AG04450 (cell line): ENCODE measurements at regions of chr1 and their contacts with region 1.

Region 1: DNA sequence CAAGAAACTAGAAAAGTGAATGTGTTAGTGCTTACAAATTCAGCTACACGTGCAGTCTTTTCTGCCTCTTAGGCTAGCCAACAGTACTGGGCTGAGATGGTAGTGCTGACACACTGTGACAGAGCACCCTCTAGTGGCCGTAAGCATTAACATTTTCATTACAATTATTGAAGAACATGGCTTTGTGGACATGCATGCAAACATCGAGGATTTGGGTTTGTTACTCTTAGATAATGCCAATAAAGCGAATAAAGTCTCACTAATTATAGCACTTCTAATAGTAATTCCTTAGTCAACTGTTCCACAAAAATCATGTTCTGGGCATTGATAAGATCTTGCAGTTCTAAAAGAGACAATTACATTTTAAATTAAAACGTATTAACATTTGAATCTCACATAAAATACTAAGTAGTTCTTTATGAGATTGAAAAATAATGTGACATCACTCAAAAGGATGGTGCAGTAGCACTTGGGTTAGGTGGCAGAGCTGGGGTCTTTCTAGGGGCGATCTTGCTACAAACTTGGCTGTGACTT is 47.1 kb downstream of the MYSM1 start:
- DNase-seq: peak; percentile 72
- H3K4me3 ChIP-seq: no peak overlapping the region
- H3K27ac ChIP-seq: no peak overlapping the region
- H3K27me3 ChIP-seq: no peaks in the 10 kb centered on the region
- CTCF ChIP-seq: peak; percentile 77

Region 2: DNA sequence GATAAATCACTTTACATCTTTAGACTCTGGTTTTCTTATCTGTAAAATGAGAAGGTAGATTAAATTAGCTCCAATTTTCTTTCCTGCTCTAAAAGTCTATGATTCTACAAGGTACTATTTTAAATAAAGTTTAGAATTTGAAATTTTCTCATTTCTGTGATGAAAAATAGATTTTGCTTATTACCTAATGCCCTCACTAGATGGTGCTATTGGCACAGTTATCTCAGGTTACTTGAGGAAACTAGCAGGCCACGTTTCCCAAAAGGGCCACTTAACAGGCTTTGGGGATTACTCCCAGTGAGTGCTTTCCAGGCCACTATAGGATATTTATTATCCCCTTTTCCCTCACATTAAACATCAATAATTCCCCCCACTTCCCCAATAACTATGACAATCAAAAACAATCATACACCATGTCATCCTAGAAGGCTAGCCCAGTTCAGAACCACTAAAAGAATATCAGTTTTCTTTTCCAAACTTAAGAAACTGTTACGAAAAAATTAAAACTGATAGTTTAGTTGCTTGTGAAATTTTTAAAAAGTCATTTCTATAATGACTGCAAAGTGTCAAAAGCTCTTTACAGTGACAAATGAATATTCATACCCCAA is 136.8 kb before region 1 on chr1:
- CTCF ChIA-PET with region 1: interaction called, 492 read pairs
- POLR2A ChIA-PET with region 1: no interaction called
- DNase-seq: peak; percentile 66
- H3K4me3 ChIP-seq: no peak overlapping the region
- H3K27ac ChIP-seq: no peak overlapping the region
- H3K27me3 ChIP-seq: no peaks in the 10 kb centered on the region
- CTCF ChIP-seq: peak; percentile 70

Region 3: GRCh38 chr1:58546520-58547308 is 106.0 kb before region 1 on chr1 and contains the start of gene OMA1:
- CTCF ChIA-PET with region 1: interaction called, 50 read pairs
- POLR2A ChIA-PET with region 1: no interaction called
- DNase-seq: peak; percentile 96
- H3K4me3 ChIP-seq: peak within 1 kb of the TSS; percentile 75
- H3K27ac ChIP-seq: peak within 1 kb of the TSS; percentile 97
- H3K27me3 ChIP-seq: peaks cover 18% of the 10 kb centered on the region
- CTCF ChIP-seq: peak; percentile 99
- polyA plus RNA-seq, gene OMA1: 12.1 and 17.3 TPM in 2 replicates

Region 4: GRCh38 chr1:58664881-58665280 is 12.2 kb after region 1 on chr1:
- CTCF ChIA-PET with region 1: interaction called, 55 read pairs
- POLR2A ChIA-PET with region 1: no interaction called
- DNase-seq: no peak
- H3K4me3 ChIP-seq: no peak overlapping the region
- H3K27ac ChIP-seq: no peak overlapping the region
- H3K27me3 ChIP-seq: no peaks in the 10 kb centered on the region
- CTCF ChIP-seq: no peak

Region 5: GRCh38 chr1:58683519-58683918 is 30.8 kb after region 1 on chr1:
- CTCF ChIA-PET with region 1: interaction called, 31 read pairs
- POLR2A ChIA-PET with region 1: no interaction called
- DNase-seq: no peak
- H3K4me3 ChIP-seq: no peak overlapping the region
- H3K27ac ChIP-seq: no peak overlapping the region
- H3K27me3 ChIP-seq: no peaks in the 10 kb centered on the region
- CTCF ChIP-seq: no peak

Region 6: DNA sequence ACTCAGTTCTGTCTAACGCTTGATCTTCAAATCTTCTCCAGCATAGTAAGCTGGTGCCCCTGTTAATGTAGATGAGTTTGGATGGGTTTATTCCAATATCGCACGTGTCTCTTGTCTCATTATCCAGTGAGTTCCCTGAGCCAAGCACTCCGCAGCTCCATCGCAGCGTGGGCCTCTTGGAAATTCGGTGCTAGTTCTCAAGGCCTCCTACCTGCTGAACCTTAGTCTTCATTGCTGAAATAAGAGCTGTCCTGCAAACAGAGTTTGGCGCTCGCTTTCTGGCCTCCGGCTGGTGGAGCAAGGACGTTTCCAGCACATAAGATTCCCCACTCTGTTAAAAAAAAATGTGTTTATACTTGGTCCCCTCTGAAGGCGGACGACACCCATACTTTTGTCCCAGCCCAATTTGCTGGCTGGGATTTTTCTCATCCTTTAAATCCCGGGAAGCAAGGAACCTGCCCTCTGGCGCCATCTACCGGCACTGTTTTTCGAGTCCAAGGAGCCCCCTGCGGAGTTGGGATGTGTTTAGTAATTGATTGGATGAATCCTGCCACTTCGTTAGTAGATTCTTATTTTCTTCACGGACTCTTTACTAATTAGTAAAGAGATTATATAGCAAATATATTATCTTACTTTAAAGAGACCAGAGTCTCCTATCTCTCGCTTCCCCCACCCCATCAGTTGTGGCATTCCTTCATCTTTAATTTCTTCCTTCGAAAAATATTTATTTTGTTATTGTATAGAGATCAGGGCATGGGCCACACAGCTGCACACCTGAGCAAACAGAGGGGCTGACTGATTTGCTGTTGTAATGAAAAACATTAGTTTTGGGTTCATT is 116.5 kb after region 1 on chr1:
- CTCF ChIA-PET with region 1: no interaction called
- POLR2A ChIA-PET with region 1: no interaction called
- DNase-seq: no peak
- H3K4me3 ChIP-seq: no peak overlapping the region
- H3K27ac ChIP-seq: peak overlapping the region; percentile 3
- H3K27me3 ChIP-seq: no peaks in the 10 kb centered on the region
- CTCF ChIP-seq: peak; percentile 86

Region 7: GRCh38 chr1:59150577-59151391 is 498.1 kb after region 1 on chr1:
- CTCF ChIA-PET with region 1: no interaction called
- POLR2A ChIA-PET with region 1: no interaction called
- DNase-seq: peak; percentile 99
- H3K4me3 ChIP-seq: peak overlapping the region; percentile 35
- H3K27ac ChIP-seq: peak overlapping the region; percentile 97
- H3K27me3 ChIP-seq: no peaks in the 10 kb centered on the region
- CTCF ChIP-seq: peak; percentile 2; the same call in 1 of the 2 replicates